Common myeloid progenitor, CD34-positive (primary cell): ENCODE measurements at regions of chr17 and their contacts with region 1.

Region 1: GRCh38 chr17:27760069-27760885 is 40.1 kb downstream of the NOS2 start:
- DNase-seq: peak; percentile 40 to 67 (median 57)
- H3K4me3 ChIP-seq: no peak overlapping the region
- H3K27ac ChIP-seq: no peak overlapping the region
- H3K4me1 ChIP-seq: no peaks in the 10 kb centered on the region
- H3K27me3 ChIP-seq: peaks cover 0 to 1% (median 0%) of the 10 kb centered on the region in 5 experiments

Region 2: DNA sequence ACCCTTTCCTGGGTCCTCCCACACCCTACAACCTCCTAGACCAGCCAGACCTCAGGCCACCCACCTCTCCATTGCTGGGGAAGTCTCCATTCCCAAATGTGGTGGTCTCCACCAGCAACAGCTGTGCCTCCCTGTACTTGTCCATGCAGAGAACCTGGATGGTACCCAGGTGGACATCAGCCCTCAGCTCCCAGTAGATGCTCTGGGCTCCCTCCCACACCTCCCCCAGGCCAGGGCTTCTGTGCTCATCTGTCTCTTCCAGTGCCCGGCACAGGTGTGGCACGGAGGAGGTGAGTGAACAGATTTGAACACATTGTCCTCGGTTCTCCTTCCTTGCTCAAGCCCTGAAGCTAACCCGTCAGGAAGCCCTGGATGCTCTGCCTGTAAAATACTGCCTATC is 94.7 kb before region 1 on chr17:
- CTCF ChIA-PET with region 1: interaction called, 11 read pairs
- POLR2A ChIA-PET with region 1: no interaction called
- DNase-seq: no peak
- H3K4me3 ChIP-seq: no peak overlapping the region
- H3K27ac ChIP-seq: no peak overlapping the region
- H3K4me1 ChIP-seq: no peaks in the 10 kb centered on the region
- H3K27me3 ChIP-seq: peaks cover 0 to 2% (median 0%) of the 10 kb centered on the region in 5 experiments